H1 (cell line): ENCODE measurements at regions of chr6 and their contacts with region 1.

Region 1: GRCh38 chr6:3742426-3743344 is 8.8 kb downstream of the PXDC1 start:
- DNase-seq: peak; percentile 60 to 98
- H3K4me3 ChIP-seq: no peak overlapping the region
- H3K27ac ChIP-seq: no peak overlapping the region
- H3K4me1 ChIP-seq: peaks cover 0 to 9% (median 4%) of the 10 kb centered on the region in 4 experiments; a peak in 5 of 7 replicates
- H3K27me3 ChIP-seq: peaks cover 0 to 2% (median 0%) of the 10 kb centered on the region in 4 experiments; a peak in 1 of 7 replicates
- CTCF ChIP-seq: peak in 2 of 3 experiments; percentile 91 to 94; a peak in 3 of 4 replicates
- EP300 ChIP-seq: no peak
- POLR2A ChIP-seq: no peak
- RAD21 ChIP-seq: peak; percentile 96 to 97

Region 2: GRCh38 chr6:3718189-3718806 is 24.4 kb before region 1 on chr6:
- CTCF ChIA-PET with region 1: no interaction called
- POLR2A ChIA-PET with region 1: no interaction called
- DNase-seq: no peak
- H3K4me3 ChIP-seq: no peak overlapping the region
- H3K27ac ChIP-seq: no peak overlapping the region
- H3K4me1 ChIP-seq: peaks cover 0 to 9% (median 4%) of the 10 kb centered on the region in 4 experiments; a peak in 6 of 7 replicates
- H3K27me3 ChIP-seq: no peaks in the 10 kb centered on the region
- CTCF ChIP-seq: no peak
- EP300 ChIP-seq: no peak
- POLR2A ChIP-seq: no peak
- RAD21 ChIP-seq: no peak

Region 3: DNA sequence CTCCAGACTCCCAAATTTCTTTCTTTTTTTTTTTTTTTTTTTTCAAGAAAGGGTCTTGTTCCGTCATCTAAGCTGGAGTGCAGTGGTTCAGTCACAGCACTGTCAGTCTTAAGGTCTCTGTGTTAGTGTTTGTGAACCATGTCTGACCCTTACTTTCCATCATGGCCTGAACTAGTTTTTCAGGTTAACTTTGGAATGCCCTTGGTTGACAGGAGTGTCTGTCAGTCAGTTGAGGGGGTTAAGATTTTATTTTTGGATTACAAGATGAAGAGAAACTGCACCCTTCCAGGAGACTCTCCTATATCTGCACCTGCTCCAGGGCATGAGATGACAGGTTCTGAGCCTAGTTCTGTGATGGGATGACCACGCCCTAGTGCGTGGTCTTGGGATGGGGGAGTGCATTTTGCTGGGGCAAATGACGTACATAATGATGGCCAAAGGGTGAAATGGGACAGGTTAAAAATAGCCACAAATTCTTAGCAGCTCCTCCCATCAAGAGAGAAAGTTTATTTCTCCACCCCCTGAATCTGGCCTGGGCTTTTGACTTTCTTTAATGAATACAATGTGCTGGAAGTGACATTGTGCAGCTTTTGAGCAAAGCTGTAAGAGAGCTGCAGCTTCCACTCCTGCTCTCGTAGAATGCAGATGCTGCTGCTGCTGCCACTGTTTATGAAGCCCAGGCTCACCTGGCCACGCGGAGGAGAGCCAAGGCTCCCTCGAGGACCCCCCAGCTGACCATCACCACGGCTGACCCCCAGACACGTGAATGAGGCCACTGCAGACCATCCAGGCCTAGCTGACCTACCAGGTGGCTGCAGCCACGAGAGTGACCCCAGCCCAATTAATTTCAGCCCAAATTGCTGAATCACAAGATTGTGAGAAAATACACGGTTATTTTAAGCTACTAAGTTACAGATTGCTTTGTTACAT is 76.8 kb after region 1 on chr6:
- CTCF ChIA-PET with region 1: interaction called, 63 read pairs
- POLR2A ChIA-PET with region 1: no interaction called
- DNase-seq: no peak
- H3K4me3 ChIP-seq: no peak overlapping the region
- H3K27ac ChIP-seq: no peak overlapping the region
- H3K4me1 ChIP-seq: peaks cover 0 to 13% (median 7%) of the 10 kb centered on the region in 4 experiments; a peak in 5 of 7 replicates
- H3K27me3 ChIP-seq: peaks cover 0 to 3% (median under 1%) of the 10 kb centered on the region in 4 experiments; a peak in 1 of 7 replicates
- CTCF ChIP-seq: no peak
- EP300 ChIP-seq: no peak
- POLR2A ChIP-seq: no peak
- RAD21 ChIP-seq: no peak

Region 4: GRCh38 chr6:3825851-3826581 is 83.3 kb after region 1 on chr6:
- CTCF ChIA-PET with region 1: interaction called, 63 read pairs
- POLR2A ChIA-PET with region 1: interaction called, 3 read pairs
- DNase-seq: no peak
- H3K4me3 ChIP-seq: no peak overlapping the region
- H3K27ac ChIP-seq: no peak overlapping the region
- H3K4me1 ChIP-seq: peaks cover 0 to 3% (median under 1%) of the 10 kb centered on the region in 4 experiments; a peak in 2 of 7 replicates
- H3K27me3 ChIP-seq: no peaks in the 10 kb centered on the region
- CTCF ChIP-seq: no peak
- EP300 ChIP-seq: no peak
- POLR2A ChIP-seq: no peak
- RAD21 ChIP-seq: no peak

Region 5: DNA sequence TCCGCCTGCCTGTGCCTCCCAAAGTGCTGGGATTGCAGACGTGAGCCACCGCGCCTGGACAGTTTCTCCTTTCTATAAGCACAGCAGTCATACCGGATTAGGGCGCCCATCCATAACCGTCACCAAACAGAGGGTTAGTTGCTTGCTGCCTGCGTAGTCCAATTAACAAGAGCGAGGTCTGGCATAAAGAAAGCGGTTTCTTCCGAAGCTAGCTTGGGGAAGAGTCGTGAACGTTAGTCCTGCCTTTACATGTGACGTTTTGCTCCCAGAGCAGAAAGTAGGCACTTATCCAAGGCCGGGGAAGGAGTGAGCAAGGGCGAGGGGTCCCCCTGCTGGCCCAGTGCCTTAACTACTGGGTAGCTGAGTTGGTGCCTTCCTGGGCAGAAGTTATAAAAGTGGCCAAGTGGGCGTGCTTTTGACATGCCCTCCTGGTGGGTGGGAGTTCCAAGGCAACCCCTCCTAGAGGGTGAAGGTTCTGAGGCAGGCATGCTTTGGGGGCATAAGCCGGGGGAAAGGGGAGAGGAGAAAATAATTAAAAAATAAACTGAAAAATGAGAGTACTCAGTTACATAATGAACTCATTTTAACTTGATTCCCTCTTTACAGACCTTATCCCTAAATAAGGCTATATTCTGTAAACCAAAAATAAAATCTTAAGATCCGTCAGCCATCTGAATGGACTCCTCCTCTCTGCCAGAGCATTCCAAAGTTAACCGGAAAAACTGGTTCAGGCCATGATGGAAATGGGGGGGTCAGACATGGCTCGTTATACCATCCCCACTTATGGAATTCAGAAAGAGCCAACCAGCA is 248.2 kb after region 1 on chr6:
- CTCF ChIA-PET with region 1: interaction called, 10 read pairs
- POLR2A ChIA-PET with region 1: no interaction called
- DNase-seq: peak; percentile 73 to 93
- H3K4me3 ChIP-seq: no peak overlapping the region; a peak in 1 of 8 replicates
- H3K27ac ChIP-seq: no peak overlapping the region
- H3K4me1 ChIP-seq: peaks cover 2 to 14% (median 8%) of the 10 kb centered on the region in 4 experiments; a peak in 5 of 7 replicates
- H3K27me3 ChIP-seq: no peaks in the 10 kb centered on the region
- CTCF ChIP-seq: peak; percentile 91 to 98 (median 93)
- EP300 ChIP-seq: no peak
- POLR2A ChIP-seq: no peak
- RAD21 ChIP-seq: peak; percentile 90 to 96